HEK293 (cell line): ENCODE measurements at regions of chr6 and their contacts with region 1.

Region 1: DNA sequence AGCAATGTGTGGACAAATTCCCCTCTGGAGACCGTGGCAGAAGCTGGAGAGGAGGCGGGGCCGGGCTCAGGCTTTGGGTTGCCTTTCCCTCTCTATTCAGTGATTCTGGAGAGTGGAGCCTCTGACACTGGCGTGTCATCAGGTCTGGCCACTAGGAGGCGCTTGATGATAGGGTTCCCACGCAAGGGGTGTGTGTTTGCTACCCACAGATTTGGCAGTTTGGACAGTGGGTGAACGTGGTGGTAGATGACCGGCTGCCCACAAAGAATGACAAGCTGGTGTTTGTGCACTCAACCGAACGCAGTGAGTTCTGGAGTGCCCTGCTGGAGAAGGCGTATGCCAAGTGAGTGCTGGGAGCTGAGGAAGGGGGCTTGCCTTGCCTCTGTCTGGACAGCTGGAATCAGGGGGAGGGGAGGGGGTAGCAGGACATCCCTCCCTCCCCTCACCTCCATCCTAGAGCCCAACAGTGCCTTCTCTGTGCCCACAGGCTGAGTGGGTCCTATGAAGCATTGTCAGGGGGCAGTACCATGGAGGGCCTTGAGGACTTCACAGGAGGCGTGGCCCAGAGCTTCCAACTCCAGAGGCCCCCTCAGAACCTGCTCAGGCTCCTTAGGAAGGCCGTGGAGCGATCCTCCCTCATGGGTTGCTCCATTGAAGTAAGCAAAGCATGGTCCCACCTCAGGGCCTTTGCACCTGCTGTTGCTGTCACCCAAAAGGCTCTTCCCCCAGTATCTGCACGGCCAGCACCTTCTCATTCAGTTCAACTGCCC is 14.3 kb downstream of the CAPN11 start:
- H3K4me3 ChIP-seq: no peak overlapping the region
- H3K27ac ChIP-seq: no peak overlapping the region
- H3K4me1 ChIP-seq: no peaks in the 10 kb centered on the region
- CTCF ChIP-seq: peak; percentile 83

Region 2: DNA sequence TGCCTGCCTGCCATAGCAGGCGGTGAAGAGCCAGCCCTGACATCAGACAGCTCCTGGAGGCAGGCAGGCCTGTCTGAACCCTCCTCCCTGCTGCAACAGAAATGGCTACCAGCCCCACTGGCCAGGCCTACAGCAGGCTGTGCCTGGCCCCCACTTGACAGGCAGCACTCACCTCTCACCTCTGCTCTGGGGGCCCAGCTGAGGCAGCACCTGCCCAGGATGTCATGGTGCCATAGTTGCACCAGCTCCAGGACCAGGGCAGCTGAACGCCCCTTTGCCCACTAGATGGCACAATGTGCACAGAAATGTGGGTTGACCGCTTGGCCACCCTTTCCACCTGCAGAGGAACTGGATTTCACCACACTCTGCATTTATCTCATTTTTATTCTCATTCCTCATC is 76.3 kb before region 1 on chr6:
- CTCF ChIA-PET with region 1: interaction called, 16 read pairs
- POLR2A ChIA-PET with region 1: no interaction called
- H3K4me3 ChIP-seq: no peak overlapping the region
- H3K27ac ChIP-seq: no peak overlapping the region
- H3K4me1 ChIP-seq: no peaks in the 10 kb centered on the region
- CTCF ChIP-seq: peak; percentile 88

Region 3: DNA sequence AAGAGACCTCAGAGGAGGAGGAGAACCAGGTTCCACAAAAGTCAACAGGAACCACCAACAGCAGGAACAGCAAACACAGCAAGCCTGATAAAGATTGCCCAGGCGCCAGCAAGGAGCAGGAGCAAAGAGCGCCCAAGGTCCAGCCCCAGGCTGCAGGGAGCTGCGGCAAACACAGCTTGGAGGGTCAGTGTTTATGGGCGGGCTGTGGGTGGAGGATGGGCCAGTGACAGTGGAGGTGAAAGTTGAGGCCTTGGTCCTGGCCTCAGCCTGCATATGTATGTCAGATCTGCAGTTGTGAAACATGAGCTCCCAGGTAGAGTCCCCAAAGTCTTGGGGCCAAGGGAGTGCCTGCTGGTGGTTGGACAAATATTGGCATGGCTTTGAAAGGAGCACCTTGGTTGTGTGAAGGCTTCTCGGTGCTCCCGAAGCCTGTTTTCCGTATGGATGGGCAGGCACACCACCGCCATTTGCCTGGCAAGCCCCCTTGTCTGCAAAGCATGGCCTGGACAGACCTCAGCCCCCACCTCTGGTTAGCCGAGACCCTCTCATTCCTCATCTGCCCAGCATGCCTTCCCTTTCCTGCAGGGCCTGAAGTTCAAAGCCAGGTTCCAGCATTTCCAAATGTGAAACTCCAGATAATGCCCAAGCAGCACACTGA is 16.3 kb before region 1 on chr6:
- CTCF ChIA-PET with region 1: interaction called, 36 read pairs
- POLR2A ChIA-PET with region 1: interaction called, 4 read pairs
- H3K4me3 ChIP-seq: no peak overlapping the region
- H3K27ac ChIP-seq: no peak overlapping the region
- H3K4me1 ChIP-seq: no peaks in the 10 kb centered on the region
- CTCF ChIP-seq: no peak

Region 4: DNA sequence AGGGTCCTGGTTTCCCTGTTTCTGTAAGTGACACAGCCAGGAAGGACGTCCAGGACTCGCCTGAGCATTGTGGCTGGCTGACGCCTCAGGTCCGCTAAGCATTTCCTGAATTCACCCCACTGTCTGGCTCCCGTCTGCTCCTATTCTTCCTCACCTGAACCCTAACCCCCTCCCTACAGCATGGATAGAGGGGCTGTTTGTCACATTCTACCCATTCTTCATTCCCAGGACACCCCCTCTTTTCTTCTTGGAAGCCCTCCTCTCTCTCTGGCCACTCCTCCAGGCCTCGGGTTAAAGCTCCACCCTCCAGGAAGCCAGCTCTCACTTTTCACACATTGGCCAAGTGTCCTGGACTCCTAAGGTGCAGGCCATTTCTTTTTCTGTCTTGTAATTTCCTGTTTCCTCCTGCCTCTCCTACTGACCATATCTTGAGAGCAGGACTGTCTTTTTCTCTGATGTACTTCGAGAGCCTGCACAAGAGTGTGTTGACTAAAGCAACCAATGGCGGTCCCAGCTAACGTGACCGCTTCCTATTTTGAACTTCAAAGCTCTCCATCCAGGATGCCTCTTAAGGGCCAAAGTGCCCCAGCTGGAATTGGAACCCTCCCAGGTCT is 19.6 kb after region 1 on chr6:
- CTCF ChIA-PET with region 1: interaction called, 32 read pairs
- POLR2A ChIA-PET with region 1: interaction called, 3 read pairs
- H3K4me3 ChIP-seq: no peak overlapping the region
- H3K27ac ChIP-seq: no peak overlapping the region
- H3K4me1 ChIP-seq: no peaks in the 10 kb centered on the region
- CTCF ChIP-seq: no peak

Region 5: GRCh38 chr6:44226368-44227146 is 53.6 kb after region 1 on chr6:
- CTCF ChIA-PET with region 1: interaction called, 29 read pairs
- POLR2A ChIA-PET with region 1: interaction called, 11 read pairs
- H3K4me3 ChIP-seq: no peak overlapping the region
- H3K27ac ChIP-seq: no peak overlapping the region
- H3K4me1 ChIP-seq: peaks cover 22% of the 10 kb centered on the region
- CTCF ChIP-seq: no peak

Region 6: GRCh38 chr6:44251576-44252524 is 78.9 kb after region 1 on chr6:
- CTCF ChIA-PET with region 1: interaction called, 35 read pairs
- POLR2A ChIA-PET with region 1: interaction called, 10 read pairs
- H3K4me3 ChIP-seq: no peak overlapping the region
- H3K27ac ChIP-seq: no peak overlapping the region
- H3K4me1 ChIP-seq: no peaks in the 10 kb centered on the region
- CTCF ChIP-seq: no peak